Dendritic cell treated with granulocyte-macrophage colony-stimulating factor and Interleukin-4, amounts not matched to agents 40 ng/mL and 50 ng/mL, for 4 days (primary cell): ENCODE measurements at regions of chr10 and their contacts with region 1.

Region 1: GRCh38 chr10:97196223-97197029 is 10.7 kb upstream of the SLIT1 start:
- H3K4me3 Mint-ChIP-seq: peak overlapping the region; percentile 68
- H3K27ac Mint-ChIP-seq: no peak overlapping the region
- H3K4me1 Mint-ChIP-seq: peaks cover 15% of the 10 kb centered on the region
- H3K27me3 Mint-ChIP-seq: peaks cover 64% of the 10 kb centered on the region

Region 2: DNA sequence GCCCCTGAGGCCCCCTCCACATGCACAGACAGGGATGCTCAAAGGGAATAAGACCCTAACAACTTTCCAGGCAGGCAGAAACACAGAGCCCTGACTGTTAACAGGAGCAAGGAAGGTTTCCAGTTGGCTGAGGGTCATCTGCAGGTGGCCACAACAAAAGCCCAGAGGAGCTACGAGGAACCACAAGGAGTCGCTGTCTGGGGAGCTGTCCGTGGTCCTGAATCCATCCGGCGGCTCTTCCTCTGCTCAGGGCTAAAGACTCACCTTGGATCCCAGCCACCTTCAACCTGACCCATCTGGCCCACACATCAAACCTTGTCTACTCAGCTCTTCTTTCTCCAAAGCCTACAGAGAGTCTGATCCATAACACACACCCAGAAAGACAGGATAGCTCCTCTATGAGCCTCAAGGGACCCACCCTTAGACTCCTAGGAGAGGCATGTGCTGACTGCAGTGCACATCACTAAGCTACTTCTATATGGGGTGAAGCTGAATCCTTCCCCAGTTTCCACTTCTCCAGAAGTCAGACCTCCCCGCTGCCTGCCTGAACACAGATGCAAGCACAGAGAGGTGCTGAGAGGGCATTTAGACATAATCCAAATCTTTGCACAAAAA is 114.7 kb before region 1 on chr10:
- intact Hi-C with region 1: loop called (anchors 5 kb)
- H3K4me3 Mint-ChIP-seq: no peak overlapping the region
- H3K27ac Mint-ChIP-seq: no peak overlapping the region
- H3K4me1 Mint-ChIP-seq: no peaks in the 10 kb centered on the region
- H3K27me3 Mint-ChIP-seq: peaks cover 24% of the 10 kb centered on the region

Region 3: GRCh38 chr10:97347317-97347716 is 150.9 kb after region 1 on chr10:
- intact Hi-C with region 1: no loop called
- H3K4me3 Mint-ChIP-seq: no peak overlapping the region
- H3K27ac Mint-ChIP-seq: no peak overlapping the region
- H3K4me1 Mint-ChIP-seq: no peaks in the 10 kb centered on the region
- H3K27me3 Mint-ChIP-seq: no peaks in the 10 kb centered on the region